Naive thymus-derived CD4-positive, alpha-beta T cell (primary cell): ENCODE measurements at regions of chr18 and their contacts with region 1.

Region 1: DNA sequence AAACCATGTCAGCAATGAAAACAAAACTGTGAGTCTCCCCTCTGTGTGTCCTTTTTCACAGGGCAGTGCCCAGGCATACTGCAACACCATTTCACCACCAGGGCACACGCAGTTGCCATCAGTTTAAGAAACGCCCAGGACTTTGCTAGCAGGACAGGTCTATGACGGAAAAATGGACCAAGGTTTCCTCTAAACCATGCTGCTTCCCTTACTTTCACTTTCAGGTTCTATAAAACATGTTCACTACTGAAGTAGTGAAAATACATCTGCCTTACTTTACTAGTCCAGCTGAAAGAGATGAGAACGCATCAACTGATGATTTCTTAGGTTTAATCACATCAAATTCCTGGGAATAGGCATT is 110.5 kb downstream of the TCF4 start:
- DNase-seq: peak in 6 of 9 donors; percentile 15 to 53 (median 34)
- ATAC-seq: peak; percentile 79
- H3K4me3 ChIP-seq: peak overlapping the region; percentile 65
- H3K4me3 Mint-ChIP-seq: peak overlapping the region; percentile 79 to 97 (median 91)
- H3K27ac ChIP-seq: peak overlapping the region; percentile 55
- H3K27ac Mint-ChIP-seq: peak overlapping the region; percentile 80 to 98 (median 91)
- H3K4me1 ChIP-seq: peaks cover 0 to 4% of the 10 kb centered on the region in 2 donors
- H3K4me1 Mint-ChIP-seq: peaks cover 12 to 45% (median 22%) of the 10 kb centered on the region in 7 donors
- H3K27me3 ChIP-seq: no peaks in the 10 kb centered on the region
- H3K27me3 Mint-ChIP-seq: peaks cover 0 to 12% (median 0%) of the 10 kb centered on the region in 5 donors

Region 2: DNA sequence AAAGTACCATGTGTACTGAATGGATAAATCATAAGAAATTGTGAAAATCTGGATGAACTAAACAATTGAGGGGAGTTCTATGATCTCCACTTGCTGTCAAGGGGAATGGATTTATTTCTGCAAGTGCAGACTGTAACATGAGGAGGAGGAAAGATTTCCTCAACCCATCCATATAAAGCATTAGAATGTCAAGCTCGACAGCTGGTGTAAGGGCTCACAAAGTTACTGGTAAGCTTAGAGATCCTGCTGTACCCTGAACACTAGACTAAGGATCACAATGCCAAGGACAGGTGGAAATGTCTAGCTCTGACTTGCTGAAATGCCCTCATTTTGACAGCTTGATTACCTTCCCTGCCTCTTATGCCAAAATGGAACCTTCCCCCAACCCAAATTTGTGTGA is 14.8 kb before region 1 on chr18:
- CTCF ChIA-PET with region 1: no interaction called
- POLR2A ChIA-PET with region 1: no interaction called
- intact Hi-C with region 1: loop called in 1 of 2 experiments (anchors 2 kb)
- DNase-seq: no peak
- ATAC-seq: no peak
- H3K4me3 ChIP-seq: no peak overlapping the region
- H3K4me3 Mint-ChIP-seq: no peak overlapping the region
- H3K27ac ChIP-seq: no peak overlapping the region
- H3K27ac Mint-ChIP-seq: no peak overlapping the region
- H3K4me1 ChIP-seq: no peaks in the 10 kb centered on the region
- H3K4me1 Mint-ChIP-seq: no peaks in the 10 kb centered on the region
- H3K27me3 ChIP-seq: no peaks in the 10 kb centered on the region
- H3K27me3 Mint-ChIP-seq: peaks cover 3 to 21% (median 7%) of the 10 kb centered on the region in 5 donors

Region 3: DNA sequence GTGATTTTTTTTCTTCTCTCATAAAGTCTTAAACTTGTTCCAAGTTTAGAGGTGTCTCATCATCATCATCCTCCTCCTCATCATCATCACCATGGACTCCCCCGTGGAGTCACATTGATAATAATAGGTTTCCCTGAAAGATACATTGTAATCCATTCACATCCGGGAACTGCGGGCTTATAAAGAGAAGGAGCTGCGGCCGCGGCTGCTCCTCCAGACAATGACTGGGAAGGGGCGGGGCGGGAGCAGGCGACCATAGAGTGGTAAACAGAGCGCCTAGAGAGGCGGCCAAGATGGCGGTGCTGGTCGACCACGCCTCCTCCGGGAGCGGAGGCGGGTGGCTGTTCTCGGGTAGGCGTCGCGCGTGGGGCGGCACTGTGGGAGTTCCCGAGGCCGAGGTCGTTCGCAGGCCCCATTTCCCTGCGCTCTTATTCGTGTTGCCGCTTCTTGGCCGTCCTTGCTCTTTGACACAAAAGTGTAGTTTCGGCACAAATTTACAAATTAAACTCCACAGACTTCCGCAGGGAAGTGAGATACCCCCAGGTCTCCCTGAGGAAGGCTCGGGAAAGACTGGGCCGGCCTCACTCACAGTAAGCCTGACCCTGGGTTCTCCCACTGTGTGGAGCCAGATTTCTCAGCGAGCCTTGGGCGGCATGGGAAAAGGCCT is 112.3 kb after region 1 on chr18:
- CTCF ChIA-PET with region 1: no interaction called
- POLR2A ChIA-PET with region 1: no interaction called
- intact Hi-C with region 1: loop called (anchors 1 to 5 kb)
- DNase-seq: peak; percentile 61 to 89 (median 77)
- ATAC-seq: peak; percentile 97
- H3K4me3 ChIP-seq: peak overlapping the region; percentile 25
- H3K4me3 Mint-ChIP-seq: peak overlapping the region; percentile 82 to 94 (median 89)
- H3K27ac ChIP-seq: peak overlapping the region; percentile 53
- H3K27ac Mint-ChIP-seq: peak overlapping the region; percentile 25 to 86 (median 75)
- H3K4me1 ChIP-seq: no peaks in the 10 kb centered on the region
- H3K4me1 Mint-ChIP-seq: peaks cover 12 to 42% (median 36%) of the 10 kb centered on the region in 7 donors
- H3K27me3 ChIP-seq: peaks cover 0 to 8% of the 10 kb centered on the region in 2 donors
- H3K27me3 Mint-ChIP-seq: peaks cover 38 to 70% (median 48%) of the 10 kb centered on the region in 5 donors